A549 (cell line): ENCODE measurements at regions of chr17 and their contacts with region 1.

Region 1: GRCh38 chr17:2929881-2930533 is 133.4 kb downstream of the OR1D5 start:
- DNase-seq: peak; percentile 71 to 83
- ATAC-seq: peak; percentile 90 to 92
- H3K4me3 ChIP-seq: no peak overlapping the region
- H3K27ac ChIP-seq: peak overlapping the region; percentile 63 to 67; a peak in 5 of 6 replicates
- H3K4me1 ChIP-seq: peaks cover 32% of the 10 kb centered on the region
- CTCF ChIP-seq: peak; percentile 89
- EP300 ChIP-seq: no peak
- POLR2A ChIP-seq: no peak
- RAD21 ChIP-seq: peak; percentile 85 to 91

Region 2: DNA sequence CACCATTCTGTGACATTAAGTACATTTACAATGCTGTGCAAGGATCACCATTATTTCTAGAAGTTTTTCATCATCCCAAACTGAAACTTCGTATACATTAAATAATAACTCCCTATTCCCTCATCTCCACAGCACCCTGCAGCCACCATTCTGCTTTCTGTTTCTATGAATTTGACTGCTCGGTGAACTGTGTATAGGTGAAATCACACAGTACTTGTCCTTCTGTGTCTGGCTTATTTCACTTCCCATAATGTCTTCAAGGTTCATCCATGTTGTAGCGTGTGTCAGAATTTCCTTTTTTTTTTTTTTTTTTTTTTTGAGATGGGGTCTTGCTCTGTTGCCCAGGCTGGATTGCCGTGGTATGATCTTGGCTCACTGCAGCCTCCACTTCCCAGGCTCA is 113.3 kb before region 1 on chr17:
- CTCF ChIA-PET with region 1: no interaction called
- POLR2A ChIA-PET with region 1: no interaction called
- DNase-seq: no peak
- ATAC-seq: no peak
- H3K4me3 ChIP-seq: no peak overlapping the region
- H3K27ac ChIP-seq: no peak overlapping the region
- H3K4me1 ChIP-seq: peaks cover 11% of the 10 kb centered on the region; the same call in 2 of the 3 replicates
- CTCF ChIP-seq: no peak
- EP300 ChIP-seq: no peak
- POLR2A ChIP-seq: no peak
- RAD21 ChIP-seq: no peak

Region 3: DNA sequence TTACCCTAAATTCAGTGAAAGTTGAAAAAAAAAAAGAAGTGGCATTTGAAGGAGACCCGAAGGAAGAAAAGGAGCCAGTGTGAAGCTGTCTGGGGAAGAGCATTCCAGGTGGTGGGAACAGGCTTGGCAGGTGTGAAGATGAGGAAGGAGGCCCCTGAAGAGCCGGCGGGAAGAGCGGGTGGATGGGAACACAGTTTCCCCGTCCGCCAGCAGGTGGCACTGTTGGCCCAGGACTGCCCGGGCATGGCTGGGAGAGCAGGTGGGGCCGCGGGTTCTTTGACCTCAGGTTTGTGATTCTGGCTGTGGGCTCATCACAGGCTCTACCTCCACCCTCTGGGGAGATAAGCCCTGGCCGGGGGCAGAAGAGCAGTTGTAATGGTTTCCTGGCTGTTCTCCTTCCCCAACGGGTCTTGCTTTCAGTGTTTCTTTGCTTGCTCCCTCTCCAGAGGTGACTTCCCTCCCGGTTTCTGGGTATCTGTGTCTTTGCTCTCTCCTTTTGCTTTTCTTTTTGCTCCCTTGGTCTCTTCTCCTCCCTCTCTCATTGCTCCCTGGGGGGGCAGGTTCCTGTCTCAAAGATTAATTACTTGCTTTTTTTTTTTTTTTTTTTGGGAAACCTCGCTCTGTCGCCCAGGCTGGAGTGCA is 101.5 kb before region 1 on chr17:
- CTCF ChIA-PET with region 1: interaction called, 34 read pairs
- POLR2A ChIA-PET with region 1: no interaction called
- DNase-seq: peak; percentile 82 to 91
- ATAC-seq: peak; percentile 95 to 97
- H3K4me3 ChIP-seq: no peak overlapping the region
- H3K27ac ChIP-seq: peak overlapping the region; percentile 60 to 70
- H3K4me1 ChIP-seq: peaks cover 7% of the 10 kb centered on the region
- CTCF ChIP-seq: peak; percentile 98
- EP300 ChIP-seq: no peak
- POLR2A ChIP-seq: no peak
- RAD21 ChIP-seq: peak; percentile 99

Region 4: GRCh38 chr17:2853111-2853721 is 76.8 kb before region 1 on chr17:
- CTCF ChIA-PET with region 1: interaction called, 327 read pairs
- POLR2A ChIA-PET with region 1: no interaction called
- DNase-seq: peak; percentile 63 to 73
- ATAC-seq: peak; percentile 57 to 72
- H3K4me3 ChIP-seq: peak overlapping the region; percentile 72
- H3K27ac ChIP-seq: peak overlapping the region; percentile 87 to 92
- H3K4me1 ChIP-seq: peaks cover 23% of the 10 kb centered on the region
- CTCF ChIP-seq: no peak
- EP300 ChIP-seq: no peak
- POLR2A ChIP-seq: no peak
- RAD21 ChIP-seq: 0 out of 5 replicates have a peak, but pooled peaks of 1 of the 2 experiments have one; percentile 15

Region 5: GRCh38 chr17:2916461-2916860 is 13.5 kb before region 1 on chr17:
- CTCF ChIA-PET with region 1: interaction called, 66 read pairs
- POLR2A ChIA-PET with region 1: no interaction called
- DNase-seq: no peak
- ATAC-seq: no peak
- H3K4me3 ChIP-seq: no peak overlapping the region
- H3K27ac ChIP-seq: no peak overlapping the region
- H3K4me1 ChIP-seq: no peaks in the 10 kb centered on the region
- CTCF ChIP-seq: no peak
- EP300 ChIP-seq: no peak
- POLR2A ChIP-seq: no peak
- RAD21 ChIP-seq: no peak

Region 6: GRCh38 chr17:2954898-2955445 is 25.0 kb after region 1 on chr17:
- CTCF ChIA-PET with region 1: interaction called, 11 read pairs
- POLR2A ChIA-PET with region 1: no interaction called
- DNase-seq: peak; percentile 90 to 98
- ATAC-seq: peak; percentile 86
- H3K4me3 ChIP-seq: no peak overlapping the region
- H3K27ac ChIP-seq: peak overlapping the region; percentile 83 to 91
- H3K4me1 ChIP-seq: peaks cover 73% of the 10 kb centered on the region
- CTCF ChIP-seq: no peak
- EP300 ChIP-seq: peak; percentile 96; a peak in 4 of 5 replicates
- POLR2A ChIP-seq: no peak
- RAD21 ChIP-seq: peak in 1 of 2 experiments; percentile 60; a peak in 3 of 5 replicates

Region 7: GRCh38 chr17:3213587-3213986 is 283.6 kb after region 1 on chr17:
- CTCF ChIA-PET with region 1: no interaction called
- POLR2A ChIA-PET with region 1: no interaction called
- DNase-seq: peak in 1 of 2 experiments; percentile 25
- ATAC-seq: peak in 1 of 2 experiments; percentile 64; a peak in 3 of 6 replicates
- H3K4me3 ChIP-seq: no peak overlapping the region
- H3K27ac ChIP-seq: no peak overlapping the region
- H3K4me1 ChIP-seq: no peaks in the 10 kb centered on the region
- CTCF ChIP-seq: no peak
- EP300 ChIP-seq: no peak
- POLR2A ChIP-seq: no peak
- RAD21 ChIP-seq: no peak